ENCODE measurements at regions of chr17 and their contacts with region 1.

Region 1: DNA sequence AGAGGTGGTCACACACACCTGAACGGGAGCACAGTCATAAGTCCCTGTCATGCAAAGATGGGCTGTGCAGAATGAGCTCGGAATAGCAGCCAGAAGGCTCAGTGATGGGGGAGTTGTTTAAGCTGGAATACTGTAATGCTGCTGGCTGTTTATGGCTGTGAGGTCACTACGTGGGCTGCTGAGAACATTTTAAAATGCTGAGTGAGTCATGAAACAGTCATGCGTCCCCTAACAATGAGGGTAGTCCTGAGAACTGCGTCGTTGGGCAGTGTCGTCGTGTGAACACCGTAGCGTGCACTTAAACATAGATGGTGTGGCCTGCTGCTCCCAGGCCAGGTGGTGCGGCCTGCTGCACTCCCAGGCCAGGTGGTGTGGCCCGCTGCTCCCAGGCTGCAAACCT is 39.7 kb downstream of the TBCD start:
- DNase-seq: no peak

Region 2: GRCh38 chr17:82180776-82181528 is 610.6 kb before region 1 on chr17:
- in situ Hi-C with region 1: no loop called
- DNase-seq: no peak

Region 3: DNA sequence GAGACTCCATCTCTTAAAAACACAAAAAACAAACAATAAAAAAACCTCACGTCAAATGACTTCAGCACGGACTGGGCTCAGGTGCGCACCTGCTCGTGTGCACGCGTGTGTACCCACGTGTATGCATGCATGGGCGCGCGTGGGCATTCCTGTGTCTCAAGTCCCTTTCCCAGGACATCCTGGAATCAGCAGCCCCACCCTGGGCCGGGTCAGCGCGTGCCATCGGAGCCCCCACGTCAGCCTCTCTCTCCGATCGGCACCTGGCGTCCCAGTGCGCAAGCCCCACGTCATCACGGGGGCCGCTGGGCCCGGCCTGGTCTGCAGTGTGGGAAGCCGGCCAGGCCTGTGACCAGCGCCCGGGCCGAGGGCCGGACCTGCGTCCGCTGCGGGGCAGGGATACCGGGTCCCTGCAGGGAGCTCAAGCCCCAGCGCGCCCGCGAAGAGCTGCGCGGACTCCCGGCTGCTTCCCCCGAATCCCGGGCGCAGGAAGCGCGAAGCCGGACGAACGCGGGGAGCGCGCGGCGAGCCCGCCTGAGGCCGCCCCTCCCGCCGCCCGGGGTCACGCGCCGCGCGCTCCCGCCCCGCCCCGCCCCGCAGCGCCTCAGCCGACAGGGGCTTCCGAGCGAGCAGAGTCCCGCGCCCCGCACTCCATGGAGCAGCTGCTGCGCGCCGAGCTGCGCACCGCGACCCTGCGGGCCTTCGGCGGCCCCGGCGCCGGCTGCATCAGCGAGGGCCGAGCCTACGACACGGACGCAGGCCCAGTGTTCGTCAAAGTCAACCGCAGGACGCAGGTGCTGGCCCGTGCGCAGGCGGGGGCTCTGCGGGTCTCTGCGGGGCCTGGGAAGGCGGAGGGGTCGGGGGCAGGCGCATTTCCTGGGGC is 56.3 kb before region 1 on chr17 and contains the start of gene FN3K:
- in situ Hi-C with region 1: no loop called
- DNase-seq: peak; percentile 53

Region 4: GRCh38 chr17:82924798-82925197 is 133.3 kb after region 1 on chr17:
- in situ Hi-C with region 1: loop called (anchors 10 kb)
- DNase-seq: no peak